H1 (cell line): ENCODE measurements at regions of chr2 and their contacts with region 1.

Region 1: DNA sequence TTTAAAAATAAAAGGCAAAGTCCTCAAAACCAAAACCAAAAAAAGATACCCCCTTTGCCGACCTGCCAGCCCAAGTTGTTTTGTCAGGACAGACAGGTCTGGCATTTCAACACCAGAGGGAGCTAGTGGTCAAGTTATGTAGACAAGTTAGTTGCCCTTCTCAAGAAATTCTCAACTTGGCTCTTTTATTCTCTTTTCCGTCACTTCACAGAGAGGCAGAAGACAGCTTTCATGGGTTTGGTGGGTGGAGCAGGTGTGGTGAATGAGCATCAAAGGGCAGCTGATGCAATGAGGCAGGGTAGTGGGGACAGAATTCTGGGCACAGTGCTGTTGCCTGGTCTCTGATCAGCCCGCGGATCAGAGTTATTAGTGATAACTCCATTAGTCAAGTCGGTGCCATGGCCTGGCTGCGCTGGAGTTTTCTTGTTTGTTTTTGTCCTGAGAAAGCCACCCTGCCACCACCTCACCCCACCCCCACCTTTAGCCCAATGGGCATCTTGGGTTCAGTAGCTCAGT is 303.7 kb upstream of the EPAS1 start:
- DNase-seq: peak; percentile 43 to 73
- H3K4me3 ChIP-seq: no peak overlapping the region
- H3K27ac ChIP-seq: no peak overlapping the region
- H3K4me1 ChIP-seq: no peaks in the 10 kb centered on the region; a peak in 1 of 7 replicates
- H3K27me3 ChIP-seq: no peaks in the 10 kb centered on the region
- CTCF ChIP-seq: peak; percentile 45 to 84 (median 78)
- EP300 ChIP-seq: no peak
- POLR2A ChIP-seq: no peak
- RAD21 ChIP-seq: peak; percentile 90 to 91

Region 2: DNA sequence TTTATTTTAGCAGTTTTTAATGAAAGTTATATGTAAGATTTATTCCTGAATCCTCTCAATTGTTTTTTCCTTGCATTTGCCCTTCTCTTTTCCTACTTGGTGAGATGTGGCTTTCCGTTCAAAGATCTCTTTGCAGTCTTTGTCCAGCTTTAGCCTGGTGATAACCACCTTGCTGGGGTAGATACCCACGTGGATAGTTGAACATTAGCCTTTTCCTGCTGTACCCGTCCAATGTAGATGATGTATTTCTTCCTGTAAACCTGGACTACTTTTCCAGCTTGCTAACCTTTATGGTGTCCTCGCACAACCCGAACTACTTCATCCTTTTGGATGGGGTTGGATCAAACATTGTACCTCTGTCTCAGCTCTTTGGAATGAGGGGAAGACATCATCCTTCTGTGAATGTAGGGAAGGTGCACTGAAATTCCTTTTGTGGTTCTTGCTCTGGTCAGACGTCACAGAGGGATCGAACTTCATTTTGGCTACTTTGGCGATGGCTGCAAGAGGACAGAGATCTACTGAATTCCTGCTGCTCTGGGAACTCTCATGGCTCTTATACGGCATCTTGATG is 10.5 kb after region 1 on chr2:
- CTCF ChIA-PET with region 1: interaction called, 19 read pairs
- POLR2A ChIA-PET with region 1: no interaction called
- DNase-seq: no peak
- H3K4me3 ChIP-seq: no peak overlapping the region
- H3K27ac ChIP-seq: no peak overlapping the region
- H3K4me1 ChIP-seq: no peaks in the 10 kb centered on the region; a peak in 1 of 7 replicates
- H3K27me3 ChIP-seq: no peaks in the 10 kb centered on the region
- CTCF ChIP-seq: no peak
- EP300 ChIP-seq: no peak
- POLR2A ChIP-seq: no peak
- RAD21 ChIP-seq: no peak

Region 3: DNA sequence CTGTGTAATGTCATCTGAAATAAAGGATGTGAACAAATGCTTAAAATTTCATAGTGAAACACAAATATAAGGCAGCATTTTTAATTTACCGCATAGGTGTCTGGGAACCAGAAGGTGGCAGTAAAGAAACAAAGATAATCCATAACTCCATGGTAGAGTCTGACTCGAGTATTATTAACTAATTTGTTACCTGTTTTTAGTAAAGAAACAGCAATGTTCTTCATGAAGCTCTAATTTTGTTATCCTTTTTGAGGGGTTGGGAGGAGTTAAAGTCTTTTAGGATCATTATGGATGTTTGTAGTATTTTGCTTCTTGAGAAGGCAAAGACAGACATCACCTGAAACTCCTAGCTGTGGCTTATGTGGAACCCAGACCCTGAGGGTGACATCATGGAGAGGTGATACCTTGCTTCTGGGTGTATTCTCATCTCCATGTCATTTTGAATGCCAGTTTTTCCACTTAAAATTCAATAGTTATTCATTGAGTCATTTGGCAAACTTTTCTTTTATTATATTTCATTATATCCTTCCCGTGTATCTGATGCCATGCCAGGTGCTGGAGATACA is 17.5 kb after region 1 on chr2:
- CTCF ChIA-PET with region 1: interaction called, 19 read pairs
- POLR2A ChIA-PET with region 1: no interaction called
- DNase-seq: peak in 1 of 2 experiments; percentile 14
- H3K4me3 ChIP-seq: no peak overlapping the region
- H3K27ac ChIP-seq: no peak overlapping the region
- H3K4me1 ChIP-seq: peaks cover 3 to 9% (median 5%) of the 10 kb centered on the region in 4 experiments; a peak in 6 of 7 replicates
- H3K27me3 ChIP-seq: no peaks in the 10 kb centered on the region
- CTCF ChIP-seq: peak in 2 of 3 experiments; percentile 38 to 53; a peak in 2 of 4 replicates
- EP300 ChIP-seq: no peak
- POLR2A ChIP-seq: no peak
- RAD21 ChIP-seq: peak; percentile 66 to 71

Region 4: DNA sequence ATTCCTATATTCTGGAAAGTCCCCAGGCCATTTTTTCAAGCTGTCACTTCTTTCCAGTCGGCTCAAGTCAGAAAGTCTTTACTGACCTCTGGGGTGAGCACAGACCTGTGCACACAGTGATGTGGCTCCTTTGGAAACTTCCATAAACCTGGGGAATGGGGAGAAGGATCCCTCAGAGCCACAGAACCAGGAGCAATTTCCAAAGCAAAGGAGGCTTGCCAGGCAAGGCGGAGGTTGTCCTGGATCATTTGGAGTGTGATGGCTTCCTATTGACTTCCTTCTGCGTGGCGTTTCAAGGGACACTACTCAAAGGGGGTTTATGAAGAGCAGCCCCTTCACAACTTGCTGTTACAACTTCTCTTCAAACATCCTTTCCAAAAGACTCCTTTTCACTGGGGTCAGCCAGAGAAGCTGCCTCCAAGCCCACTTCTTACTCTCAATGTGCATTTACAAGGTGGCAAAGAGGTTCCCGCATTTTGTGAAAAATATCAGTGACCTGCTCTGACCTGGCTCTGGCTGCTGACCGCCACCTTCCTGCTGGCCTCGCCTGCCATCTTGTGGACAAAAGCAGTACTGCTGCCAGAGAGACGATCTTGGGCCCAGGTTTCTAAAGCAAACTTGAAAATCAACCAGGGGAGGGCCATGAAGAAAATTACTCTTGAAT is 467.6 kb after region 1 on chr2:
- CTCF ChIA-PET with region 1: interaction called, 31 read pairs
- POLR2A ChIA-PET with region 1: no interaction called
- DNase-seq: peak; percentile 31 to 95
- H3K4me3 ChIP-seq: no peak overlapping the region
- H3K27ac ChIP-seq: no peak overlapping the region
- H3K4me1 ChIP-seq: peaks cover 0 to 4% (median 0%) of the 10 kb centered on the region in 4 experiments; a peak in 2 of 7 replicates
- H3K27me3 ChIP-seq: no peaks in the 10 kb centered on the region
- CTCF ChIP-seq: peak; percentile 88 to 97 (median 94)
- EP300 ChIP-seq: no peak
- POLR2A ChIP-seq: no peak
- RAD21 ChIP-seq: peak; percentile 98 to 99